ENCODE measurements at regions of chr12 and their contacts with region 1.

Region 1: GRCh38 chr12:65106948-65107347 is 14.2 kb downstream of the WIF1 start:
- DNase-seq: peak; percentile 9
- H3K4me3 Mint-ChIP-seq: no peak overlapping the region
- H3K27ac Mint-ChIP-seq: no peak overlapping the region
- H3K4me1 Mint-ChIP-seq: no peaks in the 10 kb centered on the region
- H3K27me3 Mint-ChIP-seq: peaks cover 20% of the 10 kb centered on the region
- CTCF ChIP-seq: no peak

Region 2: DNA sequence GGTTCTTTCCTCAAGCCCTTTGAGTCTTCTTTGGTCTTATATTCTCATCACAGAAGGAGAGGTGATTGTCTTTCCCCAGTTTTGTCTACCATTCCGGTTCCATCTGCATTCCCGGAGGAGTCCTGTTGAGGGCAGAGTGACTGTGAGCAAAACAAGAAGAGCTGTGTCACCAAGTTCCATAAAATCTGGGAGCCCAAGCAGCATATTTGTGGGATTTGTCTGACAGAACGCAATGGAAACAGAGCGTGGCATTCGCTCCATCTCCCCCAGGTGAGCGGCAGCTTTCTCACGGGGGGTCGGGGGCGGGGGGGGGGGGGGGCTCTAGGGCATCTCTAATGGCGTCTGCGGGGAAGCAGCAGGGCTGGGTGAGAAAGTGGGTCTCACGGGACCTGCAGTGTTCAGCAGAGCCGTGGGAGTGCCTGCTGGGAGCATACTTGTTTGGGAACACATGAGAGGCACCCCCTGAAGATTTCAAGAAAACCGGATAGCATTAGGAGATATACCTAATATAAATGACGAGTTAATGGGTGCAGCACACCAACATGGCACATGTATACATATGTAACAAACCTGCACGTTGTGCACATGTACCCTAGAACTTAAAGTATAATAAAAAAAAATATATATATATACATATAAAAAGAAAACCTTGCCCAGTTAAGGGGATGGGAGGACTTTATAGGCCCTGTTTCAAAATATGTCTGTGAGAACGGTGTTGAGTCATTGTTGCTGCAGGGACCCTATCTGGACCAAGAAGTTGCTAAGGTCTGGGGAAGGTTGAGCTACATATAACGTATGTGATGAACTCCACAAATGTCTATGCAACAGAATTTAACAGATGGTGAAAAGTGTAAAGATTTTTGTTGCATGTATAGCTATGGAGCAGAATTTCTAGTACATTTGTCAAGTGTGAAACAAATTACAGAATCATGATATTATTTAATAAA is 223.1 kb before region 1 on chr12:
- CTCF ChIA-PET with region 1: interaction called, 16 read pairs
- POLR2A ChIA-PET with region 1: no interaction called
- intact Hi-C with region 1: no loop called
- DNase-seq: no peak
- H3K4me3 Mint-ChIP-seq: no peak overlapping the region
- H3K27ac Mint-ChIP-seq: no peak overlapping the region
- H3K4me1 Mint-ChIP-seq: no peaks in the 10 kb centered on the region
- H3K27me3 Mint-ChIP-seq: no peaks in the 10 kb centered on the region
- CTCF ChIP-seq: no peak

Region 3: DNA sequence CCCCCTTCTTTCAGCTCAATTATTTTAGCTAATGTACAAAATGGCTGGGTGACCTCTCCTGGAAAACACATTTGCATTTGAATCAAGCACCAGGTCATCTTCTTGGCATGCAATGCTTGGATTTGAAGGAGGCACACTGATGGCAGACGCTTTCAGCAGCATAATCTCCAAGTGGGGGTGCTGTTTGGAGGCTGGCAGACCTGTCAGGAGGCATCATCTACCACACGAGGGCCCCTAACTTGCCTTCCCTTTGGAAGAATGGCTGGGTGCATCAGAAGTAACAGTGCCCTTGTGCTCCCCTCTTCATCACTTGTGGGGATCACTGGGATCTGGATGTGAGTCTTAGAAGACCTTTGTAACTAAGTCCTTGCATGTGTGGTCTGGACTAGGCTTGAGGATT is 54.3 kb before region 1 on chr12:
- CTCF ChIA-PET with region 1: no interaction called
- POLR2A ChIA-PET with region 1: no interaction called
- intact Hi-C with region 1: no loop called
- DNase-seq: no peak
- H3K4me3 Mint-ChIP-seq: no peak overlapping the region
- H3K27ac Mint-ChIP-seq: no peak overlapping the region
- H3K4me1 Mint-ChIP-seq: no peaks in the 10 kb centered on the region
- H3K27me3 Mint-ChIP-seq: peaks cover 84% of the 10 kb centered on the region
- CTCF ChIP-seq: no peak

Region 4: GRCh38 chr12:65155784-65156183 is 48.8 kb after region 1 on chr12:
- CTCF ChIA-PET with region 1: no interaction called
- POLR2A ChIA-PET with region 1: no interaction called
- intact Hi-C with region 1: no loop called
- DNase-seq: no peak
- H3K4me3 Mint-ChIP-seq: no peak overlapping the region
- H3K27ac Mint-ChIP-seq: no peak overlapping the region
- H3K4me1 Mint-ChIP-seq: peaks cover 6% of the 10 kb centered on the region
- H3K27me3 Mint-ChIP-seq: peaks cover 47% of the 10 kb centered on the region
- CTCF ChIP-seq: no peak

Region 5: GRCh38 chr12:65182012-65182739 is 75.2 kb after region 1 on chr12:
- CTCF ChIA-PET with region 1: no interaction called
- POLR2A ChIA-PET with region 1: no interaction called
- intact Hi-C with region 1: no loop called
- DNase-seq: no peak
- H3K4me3 Mint-ChIP-seq: no peak overlapping the region
- H3K27ac Mint-ChIP-seq: no peak overlapping the region
- H3K4me1 Mint-ChIP-seq: peaks cover 14% of the 10 kb centered on the region
- H3K27me3 Mint-ChIP-seq: no peaks in the 10 kb centered on the region
- CTCF ChIP-seq: no peak

Region 6: GRCh38 chr12:65232476-65233077 is 125.6 kb after region 1 on chr12:
- CTCF ChIA-PET with region 1: interaction called, 11 read pairs
- POLR2A ChIA-PET with region 1: no interaction called
- intact Hi-C with region 1: no loop called
- DNase-seq: peak; percentile 28
- H3K4me3 Mint-ChIP-seq: no peak overlapping the region
- H3K27ac Mint-ChIP-seq: peak overlapping the region; percentile 29
- H3K4me1 Mint-ChIP-seq: peaks cover 17% of the 10 kb centered on the region
- H3K27me3 Mint-ChIP-seq: no peaks in the 10 kb centered on the region
- CTCF ChIP-seq: peak; percentile 29

Region 7: GRCh38 chr12:65464930-65465329 is 358.0 kb after region 1 on chr12:
- CTCF ChIA-PET with region 1: no interaction called
- POLR2A ChIA-PET with region 1: no interaction called
- intact Hi-C with region 1: no loop called
- DNase-seq: peak; percentile 25
- H3K4me3 Mint-ChIP-seq: no peak overlapping the region
- H3K27ac Mint-ChIP-seq: no peak overlapping the region
- H3K4me1 Mint-ChIP-seq: peaks cover 8% of the 10 kb centered on the region
- H3K27me3 Mint-ChIP-seq: no peaks in the 10 kb centered on the region
- CTCF ChIP-seq: no peak